ENCODE measurements at regions of chr9 and their contacts with region 1.

Region 1: GRCh38 chr9:71355884-71356283 is 234.5 kb upstream of the TRPM3 start:
- DNase-seq: no peak
- H3K4me3 ChIP-seq: no peak overlapping the region
- H3K27ac ChIP-seq: no peak overlapping the region
- H3K4me1 ChIP-seq: no peaks in the 10 kb centered on the region
- H3K27me3 ChIP-seq: no peaks in the 10 kb centered on the region
- CTCF ChIP-seq: no peak

Region 2: DNA sequence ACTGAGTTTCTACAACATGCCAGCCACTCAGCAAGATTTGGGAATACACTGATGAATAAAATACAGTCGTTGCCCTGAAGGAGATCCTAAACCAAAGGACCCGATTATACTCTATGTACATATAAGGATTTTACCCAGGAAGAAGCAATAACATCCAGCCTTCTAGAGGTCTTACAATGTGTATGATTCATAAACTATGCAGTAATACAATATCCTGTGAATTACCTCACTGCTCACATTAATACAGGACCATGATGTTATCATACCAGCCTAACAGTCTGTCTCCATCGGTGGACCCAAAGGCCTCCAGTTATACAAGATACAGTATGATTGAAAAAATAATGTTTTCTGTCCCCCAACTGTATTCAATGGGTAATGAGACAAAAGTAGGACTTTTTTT is 76.0 kb after region 1 on chr9:
- CTCF ChIA-PET with region 1: no interaction called
- dilution Hi-C with region 1: loop called (anchors 5 kb)
- in situ Hi-C with region 1: no loop called
- intact Hi-C with region 1: no loop called
- DNase-seq: peak; percentile 4
- H3K4me3 ChIP-seq: no peak overlapping the region
- H3K27ac ChIP-seq: no peak overlapping the region
- H3K4me1 ChIP-seq: no peaks in the 10 kb centered on the region
- H3K27me3 ChIP-seq: no peaks in the 10 kb centered on the region
- CTCF ChIP-seq: no peak

Region 3: DNA sequence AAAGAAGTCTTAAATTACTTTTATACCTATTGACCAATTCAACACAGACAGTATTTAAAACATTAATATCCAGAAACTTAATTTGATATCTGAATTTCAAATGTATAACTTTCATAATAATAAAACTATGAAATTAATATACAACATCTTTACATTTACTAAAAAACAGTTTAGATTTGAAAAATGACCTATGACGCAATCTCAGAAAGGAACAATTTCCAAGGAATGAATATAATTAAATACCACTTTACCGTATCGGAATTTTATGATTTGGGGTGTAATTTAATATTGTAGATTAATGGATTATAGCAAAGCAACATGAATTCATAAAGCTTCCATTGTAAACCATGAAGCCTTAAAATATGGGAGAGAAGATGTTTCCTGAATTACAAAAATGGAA is 87.1 kb after region 1 on chr9:
- CTCF ChIA-PET with region 1: no interaction called
- dilution Hi-C with region 1: no loop called
- in situ Hi-C with region 1: no loop called
- intact Hi-C with region 1: no loop called
- DNase-seq: no peak
- H3K4me3 ChIP-seq: no peak overlapping the region
- H3K27ac ChIP-seq: no peak overlapping the region
- H3K4me1 ChIP-seq: peaks cover 7% of the 10 kb centered on the region
- H3K27me3 ChIP-seq: peaks cover 5% of the 10 kb centered on the region
- CTCF ChIP-seq: no peak

Region 4: GRCh38 chr9:71592400-71592799 is 236.5 kb after region 1 on chr9:
- CTCF ChIA-PET with region 1: no interaction called
- dilution Hi-C with region 1: no loop called
- in situ Hi-C with region 1: no loop called
- intact Hi-C with region 1: no loop called
- DNase-seq: peak; percentile 64
- H3K4me3 ChIP-seq: no peak overlapping the region
- H3K27ac ChIP-seq: no peak overlapping the region
- H3K4me1 ChIP-seq: peaks cover 4% of the 10 kb centered on the region
- H3K27me3 ChIP-seq: no peaks in the 10 kb centered on the region
- CTCF ChIP-seq: no peak

Measured in mammary epithelial cell (primary cell).